Naive thymus-derived CD4-positive, alpha-beta T cell (primary cell): ENCODE measurements at regions of chr10 and their contacts with region 1.

Region 1: DNA sequence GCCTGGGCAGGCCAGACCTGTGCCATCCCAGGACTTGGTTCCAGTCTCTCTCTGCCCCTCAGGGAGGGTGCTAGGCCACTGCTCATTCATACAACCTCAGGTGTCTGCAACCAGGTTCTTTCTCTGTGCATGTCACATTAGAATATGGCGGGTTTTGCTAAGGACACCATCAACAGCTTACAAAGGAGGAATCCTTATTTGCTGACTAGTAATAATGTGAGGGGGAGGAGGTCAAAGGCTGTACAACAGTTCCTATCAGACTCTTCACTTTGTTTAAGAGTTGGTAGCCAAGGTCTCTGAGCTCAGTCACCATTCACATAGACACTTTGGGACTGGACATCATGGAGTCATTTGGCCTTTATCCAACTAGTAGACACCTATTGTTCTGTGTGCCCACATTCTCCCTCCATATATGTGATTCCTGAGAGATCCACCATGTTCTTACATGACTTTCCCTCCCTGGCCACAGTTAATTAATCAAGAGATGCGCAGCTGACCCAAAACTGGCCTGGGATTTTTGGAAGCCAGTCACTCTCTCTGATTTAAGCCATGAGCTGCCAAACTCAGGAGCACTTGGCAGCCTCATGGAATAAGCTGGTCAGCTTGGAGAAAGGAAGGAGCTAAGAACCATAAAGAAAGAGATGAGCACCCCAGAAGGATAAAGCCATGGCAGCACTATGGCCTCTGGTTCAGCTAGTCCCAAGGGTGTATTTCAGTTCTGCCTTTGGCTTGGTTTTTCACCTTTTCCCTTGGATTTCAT is 51.2 kb downstream of the DPCD start:
- DNase-seq: no peak
- ATAC-seq: no peak
- H3K4me3 ChIP-seq: no peak overlapping the region
- H3K4me3 Mint-ChIP-seq: no peak overlapping the region
- H3K27ac ChIP-seq: no peak overlapping the region
- H3K27ac Mint-ChIP-seq: peak overlapping the region in 3 of 9 donors; percentile 13 to 65 (median 15)
- H3K4me1 ChIP-seq: no peaks in the 10 kb centered on the region
- H3K4me1 Mint-ChIP-seq: peaks cover 0 to 31% (median 17%) of the 10 kb centered on the region in 7 donors
- H3K27me3 ChIP-seq: no peaks in the 10 kb centered on the region
- H3K27me3 Mint-ChIP-seq: no peaks in the 10 kb centered on the region

Region 2: GRCh38 chr10:101686133-101686925 is 47.0 kb after region 1 on chr10:
- CTCF ChIA-PET with region 1: no interaction called
- POLR2A ChIA-PET with region 1: no interaction called
- intact Hi-C with region 1: loop called in 1 of 2 experiments (anchors 5 kb)
- DNase-seq: no peak
- ATAC-seq: no peak
- H3K4me3 ChIP-seq: no peak overlapping the region
- H3K4me3 Mint-ChIP-seq: peak overlapping the region in 1 of 10 donors; percentile 15
- H3K27ac ChIP-seq: no peak overlapping the region
- H3K27ac Mint-ChIP-seq: peak overlapping the region in 2 of 9 donors; percentile 10 to 33
- H3K4me1 ChIP-seq: peaks cover 0 to 17% of the 10 kb centered on the region in 2 donors
- H3K4me1 Mint-ChIP-seq: peaks cover 33 to 90% (median 84%) of the 10 kb centered on the region in 7 donors
- H3K27me3 ChIP-seq: no peaks in the 10 kb centered on the region
- H3K27me3 Mint-ChIP-seq: no peaks in the 10 kb centered on the region

Region 3: GRCh38 chr10:101889256-101890210 is 250.2 kb after region 1 on chr10:
- CTCF ChIA-PET with region 1: no interaction called
- POLR2A ChIA-PET with region 1: no interaction called
- intact Hi-C with region 1: no loop called
- DNase-seq: peak; percentile 15 to 66 (median 53)
- ATAC-seq: peak; percentile 78
- H3K4me3 ChIP-seq: no peak overlapping the region
- H3K4me3 Mint-ChIP-seq: no peak overlapping the region
- H3K27ac ChIP-seq: no peak overlapping the region
- H3K27ac Mint-ChIP-seq: peak overlapping the region in 4 of 9 donors; percentile 9 to 46 (median 35)
- H3K4me1 ChIP-seq: no peaks in the 10 kb centered on the region
- H3K4me1 Mint-ChIP-seq: peaks cover 0 to 6% (median 2%) of the 10 kb centered on the region in 7 donors
- H3K27me3 ChIP-seq: no peaks in the 10 kb centered on the region
- H3K27me3 Mint-ChIP-seq: no peaks in the 10 kb centered on the region